AG04450 (cell line): ENCODE measurements at regions of chr12 and their contacts with region 1.

Region 1: DNA sequence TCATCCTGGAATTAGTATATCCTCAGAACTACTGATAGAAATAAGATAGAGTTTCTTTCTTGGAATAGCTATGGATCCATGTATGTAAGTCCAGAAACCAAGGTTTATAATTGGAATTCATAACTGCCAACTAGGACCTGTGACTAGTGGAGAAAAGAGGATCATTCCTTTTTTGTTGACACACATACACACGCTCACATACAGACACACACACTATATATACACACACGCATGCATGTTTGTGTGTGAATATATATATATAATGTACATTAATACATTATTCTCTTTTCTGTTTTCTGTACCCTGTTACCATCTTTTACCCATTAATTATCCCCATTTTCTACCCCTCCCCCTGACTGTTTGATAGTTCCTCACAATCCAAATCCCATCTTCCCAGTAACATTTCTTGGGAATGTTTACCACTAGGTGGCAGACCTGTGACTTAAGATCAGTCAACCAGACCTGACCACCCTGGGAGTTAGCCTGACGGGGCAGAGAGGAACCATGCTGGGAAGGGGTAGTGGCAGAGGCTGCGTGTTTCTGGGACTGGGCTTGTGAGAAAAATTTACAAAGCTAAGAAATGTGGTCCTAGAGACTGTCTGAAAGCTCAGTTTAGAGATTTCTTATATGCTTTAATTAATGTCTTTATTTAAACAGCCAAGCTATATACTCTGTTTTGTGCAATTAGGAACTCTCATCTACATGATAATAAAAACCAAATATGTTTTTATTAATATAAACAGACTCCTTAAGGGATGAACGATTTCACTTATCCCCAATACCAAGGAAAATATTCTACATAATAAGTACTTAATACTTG is 308.0 kb downstream of the PPFIA2 start:
- DNase-seq: peak; percentile 21
- H3K4me3 ChIP-seq: no peak overlapping the region
- H3K27ac ChIP-seq: no peak overlapping the region
- H3K27me3 ChIP-seq: no peaks in the 10 kb centered on the region
- CTCF ChIP-seq: peak; percentile 69

Region 2: DNA sequence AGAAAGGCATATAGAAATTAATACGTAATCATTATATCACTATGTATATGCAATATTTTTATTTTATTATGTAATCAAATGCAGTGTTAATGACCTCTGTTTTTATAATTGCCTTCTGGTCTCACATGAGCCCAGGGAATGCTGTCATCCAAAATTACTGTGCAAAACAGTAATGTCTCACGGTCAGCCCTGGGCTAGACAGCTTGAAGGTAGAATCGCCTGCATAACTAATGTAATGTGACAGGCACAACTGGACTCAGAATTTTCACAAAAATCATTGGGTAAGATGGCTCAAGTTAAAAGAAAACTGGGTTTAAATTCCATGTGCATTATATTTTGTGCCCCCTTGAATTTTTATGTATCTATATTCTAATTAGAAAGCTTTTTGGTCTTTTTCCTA is 14.7 kb after region 1 on chr12:
- CTCF ChIA-PET with region 1: interaction called, 20 read pairs
- POLR2A ChIA-PET with region 1: no interaction called
- DNase-seq: no peak
- H3K4me3 ChIP-seq: no peak overlapping the region
- H3K27ac ChIP-seq: no peak overlapping the region
- H3K27me3 ChIP-seq: no peaks in the 10 kb centered on the region
- CTCF ChIP-seq: no peak

Region 3: DNA sequence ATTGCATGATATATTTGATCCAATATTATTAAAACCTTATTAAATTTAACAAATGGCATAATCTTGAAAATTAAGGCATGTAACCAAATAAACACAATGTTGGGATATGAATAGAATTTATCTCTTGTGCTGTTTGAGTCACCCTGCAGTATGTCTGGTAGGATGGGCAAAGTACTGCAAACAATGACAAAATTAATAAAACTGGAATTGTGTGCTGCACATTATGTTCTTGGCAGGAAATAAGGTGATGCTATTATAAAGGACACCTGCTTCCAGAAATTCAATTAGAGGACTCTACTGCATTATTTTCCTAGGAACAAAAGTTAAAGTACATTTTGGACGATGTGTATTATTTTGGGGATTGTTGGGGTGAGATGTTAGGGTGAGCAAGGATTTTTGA is 175.3 kb after region 1 on chr12:
- CTCF ChIA-PET with region 1: interaction called, 10 read pairs
- POLR2A ChIA-PET with region 1: no interaction called
- DNase-seq: no peak
- H3K4me3 ChIP-seq: no peak overlapping the region
- H3K27ac ChIP-seq: no peak overlapping the region
- H3K27me3 ChIP-seq: no peaks in the 10 kb centered on the region
- CTCF ChIP-seq: no peak

Region 4: DNA sequence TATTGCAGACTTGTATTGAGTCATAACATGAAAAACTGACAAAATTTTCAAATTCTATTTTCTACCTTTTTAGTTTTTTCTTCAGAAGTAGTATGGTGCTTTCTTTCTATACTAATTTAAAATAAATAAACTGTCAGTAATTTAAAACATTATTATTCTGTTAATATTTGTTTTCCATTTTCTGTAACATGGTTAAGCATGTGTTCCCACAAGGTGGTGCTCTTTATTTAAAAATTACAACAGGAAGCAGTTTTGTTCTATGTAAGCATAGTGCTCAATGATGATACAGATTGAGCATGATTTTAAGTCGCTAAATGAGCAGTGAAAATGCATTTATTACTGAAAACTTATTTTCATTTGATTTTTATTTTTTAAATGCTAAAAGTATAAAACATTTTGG is 193.4 kb after region 1 on chr12:
- CTCF ChIA-PET with region 1: no interaction called
- POLR2A ChIA-PET with region 1: no interaction called
- DNase-seq: no peak
- H3K4me3 ChIP-seq: no peak overlapping the region
- H3K27ac ChIP-seq: no peak overlapping the region
- H3K27me3 ChIP-seq: no peaks in the 10 kb centered on the region
- CTCF ChIP-seq: peak; percentile 49

Region 5: GRCh38 chr12:82182601-82183190 is 731.6 kb after region 1 on chr12:
- CTCF ChIA-PET with region 1: no interaction called
- POLR2A ChIA-PET with region 1: no interaction called
- DNase-seq: no peak
- H3K4me3 ChIP-seq: no peak overlapping the region
- H3K27ac ChIP-seq: no peak overlapping the region
- H3K27me3 ChIP-seq: no peaks in the 10 kb centered on the region
- CTCF ChIP-seq: no peak